MCF 10A (cell line): ENCODE measurements at regions of chr20 and their contacts with region 1.

Region 1: DNA sequence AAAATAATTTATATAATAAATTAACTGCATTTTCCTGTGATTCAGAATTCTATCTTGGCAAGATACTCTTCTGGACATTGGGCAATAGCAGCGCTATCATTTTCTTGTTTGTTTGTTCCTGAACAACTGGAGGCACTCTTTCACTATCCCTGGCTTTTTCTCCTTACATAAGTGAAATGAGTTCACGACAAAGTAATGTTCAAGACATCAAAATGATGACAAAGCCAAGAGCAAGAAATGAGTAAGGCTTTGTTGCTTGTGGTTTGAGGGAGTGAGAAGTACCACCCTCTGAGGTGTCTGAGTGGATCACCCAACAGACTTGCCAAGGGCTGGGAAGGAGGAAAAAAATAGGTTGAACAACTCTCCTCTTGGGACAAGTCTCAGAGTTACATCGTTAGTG is 466.6 kb upstream of the JAG1 start:
- DNase-seq: peak; percentile 84
- H3K4me3 Mint-ChIP-seq: no peak overlapping the region
- H3K27ac Mint-ChIP-seq: peak overlapping the region; percentile 29
- H3K4me1 Mint-ChIP-seq: peaks cover 6% of the 10 kb centered on the region
- H3K27me3 Mint-ChIP-seq: no peaks in the 10 kb centered on the region
- CTCF ChIP-seq: no peak

Region 2: DNA sequence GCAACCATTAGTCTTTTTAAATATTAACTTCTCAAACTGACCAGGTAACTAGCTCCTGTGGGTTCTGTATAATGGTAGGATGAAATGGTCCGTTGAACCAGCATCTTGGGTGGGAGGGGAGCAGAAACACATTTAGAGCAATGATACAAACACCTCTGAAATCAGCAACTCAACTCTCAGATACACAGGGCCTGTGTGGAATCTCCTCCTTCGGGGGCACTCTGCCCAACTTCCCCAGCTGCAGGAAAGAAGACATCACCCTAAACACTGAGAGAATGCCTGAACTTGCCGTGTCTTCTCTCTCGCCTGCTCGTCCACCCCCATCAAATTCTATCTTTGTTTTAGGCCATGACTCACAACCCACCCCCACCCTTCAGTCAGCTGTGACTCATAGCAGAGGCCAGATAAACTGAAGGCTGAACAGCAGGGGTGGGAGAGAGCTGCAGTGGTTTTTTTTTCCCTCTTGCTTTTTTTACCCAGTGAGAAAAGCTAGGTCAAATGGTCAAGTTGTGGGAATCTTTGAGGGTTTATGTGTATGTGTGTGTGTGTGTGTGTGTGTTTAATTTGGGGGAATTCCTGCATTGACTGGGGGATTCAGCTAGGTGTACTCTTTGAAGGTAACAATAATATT is 126.9 kb after region 1 on chr20:
- CTCF ChIA-PET with region 1: interaction called, 13 read pairs
- POLR2A ChIA-PET with region 1: interaction called, 4 read pairs
- intact Hi-C with region 1: loop called (anchors 2 kb)
- DNase-seq: peak; percentile 95
- H3K4me3 Mint-ChIP-seq: peak overlapping the region; percentile 8
- H3K27ac Mint-ChIP-seq: peak overlapping the region; percentile 76
- H3K4me1 Mint-ChIP-seq: peaks cover 21% of the 10 kb centered on the region
- H3K27me3 Mint-ChIP-seq: no peaks in the 10 kb centered on the region
- CTCF ChIP-seq: no peak

Region 3: DNA sequence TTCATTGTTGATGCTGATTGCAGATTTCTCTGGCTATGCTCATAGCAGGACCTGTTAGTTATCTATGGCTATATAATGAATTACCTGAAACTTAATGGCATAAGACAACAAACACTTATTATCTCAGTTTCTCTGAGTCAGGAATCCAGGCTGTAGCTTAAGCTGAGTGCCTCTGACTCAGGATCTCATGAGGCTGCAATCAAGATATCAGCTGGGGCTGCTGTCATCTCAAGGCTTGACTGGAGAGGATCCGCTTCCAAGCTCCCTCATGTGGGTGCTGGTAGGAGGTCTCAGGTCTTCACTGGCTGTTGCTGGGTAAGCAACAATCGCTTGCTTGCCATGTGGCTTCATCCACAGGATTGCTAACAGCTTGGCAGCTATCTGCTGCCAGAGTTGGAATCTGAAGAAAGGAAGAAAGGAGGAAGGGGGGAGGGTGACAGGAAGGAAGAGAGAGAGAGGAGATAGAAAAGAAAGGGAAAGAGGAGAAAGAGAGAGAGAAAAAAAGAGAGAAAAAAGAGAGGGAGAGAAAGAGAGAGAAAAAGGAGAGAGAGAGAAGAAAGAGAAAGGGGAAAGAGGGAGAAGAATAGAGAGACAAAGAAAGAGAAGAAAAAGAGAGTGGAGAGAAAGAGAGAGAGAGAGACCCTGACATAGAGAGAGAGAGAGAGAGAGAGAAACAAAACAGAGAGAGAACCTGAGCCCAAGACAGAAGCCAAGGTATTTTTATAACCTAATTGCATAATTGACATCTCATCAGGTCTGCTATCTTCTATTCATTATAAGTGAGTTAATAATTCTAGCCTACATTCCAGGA is 198.3 kb after region 1 on chr20:
- CTCF ChIA-PET with region 1: no interaction called
- POLR2A ChIA-PET with region 1: no interaction called
- intact Hi-C with region 1: no loop called
- DNase-seq: no peak
- H3K4me3 Mint-ChIP-seq: no peak overlapping the region
- H3K27ac Mint-ChIP-seq: no peak overlapping the region
- H3K4me1 Mint-ChIP-seq: peaks cover 6% of the 10 kb centered on the region
- H3K27me3 Mint-ChIP-seq: no peaks in the 10 kb centered on the region
- CTCF ChIP-seq: no peak